AG04450 (cell line): ENCODE measurements at regions of chr2 and their contacts with region 1.

Region 1: DNA sequence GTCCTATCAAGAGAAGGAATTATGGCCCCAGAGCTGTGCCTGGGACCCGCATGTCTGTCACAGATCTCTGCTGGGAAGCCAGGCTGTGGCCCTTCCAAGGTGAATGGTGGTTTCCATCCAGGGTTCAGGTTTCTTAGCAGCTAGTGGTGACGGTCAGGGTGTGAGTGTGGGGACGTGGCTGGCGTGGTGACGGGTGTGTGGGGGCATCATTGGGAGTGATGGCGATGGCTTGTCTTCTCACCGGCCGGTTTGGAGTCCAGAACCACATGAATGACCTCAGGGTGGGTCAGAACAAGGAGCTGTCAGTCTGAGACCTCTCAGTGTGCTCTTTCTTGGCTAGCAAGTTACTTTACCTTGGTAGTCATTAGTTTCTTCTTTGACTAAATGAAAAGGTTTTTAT is 52.6 kb downstream of the AGAP1 start:
- DNase-seq: no peak
- H3K4me3 ChIP-seq: no peak overlapping the region
- H3K27ac ChIP-seq: no peak overlapping the region
- H3K27me3 ChIP-seq: no peaks in the 10 kb centered on the region
- CTCF ChIP-seq: no peak

Region 2: DNA sequence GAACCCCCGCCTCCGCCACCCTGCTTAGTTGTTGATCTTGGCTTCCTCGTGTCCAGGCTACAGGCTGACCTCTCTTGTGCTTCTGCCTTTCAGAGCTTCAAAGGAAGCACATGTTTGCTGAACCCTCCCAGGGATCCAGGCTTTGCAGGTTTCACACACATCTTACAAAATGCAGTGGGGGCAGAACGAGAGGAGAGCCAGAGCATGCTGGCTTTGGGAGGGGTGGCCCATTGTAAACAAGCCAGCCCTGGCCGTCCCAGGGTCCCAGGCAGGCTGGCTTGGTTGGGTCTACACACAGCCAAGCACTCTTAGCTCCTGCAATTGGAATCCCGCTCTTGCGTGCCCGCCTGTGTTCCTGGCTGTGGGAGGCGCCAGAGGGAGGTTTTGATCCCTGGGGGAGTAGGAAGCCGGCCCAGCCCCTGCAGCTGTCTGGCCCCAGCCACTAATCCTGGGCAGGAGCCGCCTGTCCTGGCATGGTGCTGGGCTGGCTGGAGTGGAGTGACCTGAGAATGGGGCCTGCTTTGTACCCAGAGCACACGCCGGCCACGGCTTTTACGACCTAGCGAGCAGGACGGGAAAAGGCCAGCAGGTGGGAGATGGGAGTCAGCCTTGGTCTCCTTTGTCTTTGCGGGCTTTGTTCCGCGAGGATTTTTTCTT is 540.7 kb before region 1 on chr2:
- CTCF ChIA-PET with region 1: no interaction called
- POLR2A ChIA-PET with region 1: no interaction called
- DNase-seq: no peak
- H3K4me3 ChIP-seq: no peak overlapping the region
- H3K27ac ChIP-seq: peak overlapping the region; percentile 31
- H3K27me3 ChIP-seq: no peaks in the 10 kb centered on the region
- CTCF ChIP-seq: peak; percentile 4; the same call in 1 of the 2 replicates

Region 3: DNA sequence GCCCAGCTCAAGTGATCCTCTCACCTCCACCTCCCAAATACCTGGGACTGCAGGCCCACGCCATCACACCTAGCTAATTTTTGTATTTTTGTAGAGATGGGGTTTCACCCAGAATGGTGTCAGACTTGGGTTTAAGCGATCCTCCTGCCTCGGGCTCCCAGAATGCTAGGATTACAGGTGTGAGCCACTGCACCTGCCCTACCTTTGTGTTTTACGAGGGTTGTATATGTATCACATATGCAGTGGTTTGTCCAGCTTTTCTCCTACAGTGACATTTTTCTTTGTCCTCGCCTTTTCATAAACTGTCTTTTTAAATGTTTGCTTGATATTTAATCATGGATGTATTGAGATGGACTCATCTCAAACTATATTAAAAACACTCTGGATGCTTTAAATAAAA is 14.1 kb before region 1 on chr2:
- CTCF ChIA-PET with region 1: no interaction called
- POLR2A ChIA-PET with region 1: no interaction called
- DNase-seq: no peak
- H3K4me3 ChIP-seq: no peak overlapping the region
- H3K27ac ChIP-seq: no peak overlapping the region
- H3K27me3 ChIP-seq: no peaks in the 10 kb centered on the region
- CTCF ChIP-seq: no peak

Region 4: DNA sequence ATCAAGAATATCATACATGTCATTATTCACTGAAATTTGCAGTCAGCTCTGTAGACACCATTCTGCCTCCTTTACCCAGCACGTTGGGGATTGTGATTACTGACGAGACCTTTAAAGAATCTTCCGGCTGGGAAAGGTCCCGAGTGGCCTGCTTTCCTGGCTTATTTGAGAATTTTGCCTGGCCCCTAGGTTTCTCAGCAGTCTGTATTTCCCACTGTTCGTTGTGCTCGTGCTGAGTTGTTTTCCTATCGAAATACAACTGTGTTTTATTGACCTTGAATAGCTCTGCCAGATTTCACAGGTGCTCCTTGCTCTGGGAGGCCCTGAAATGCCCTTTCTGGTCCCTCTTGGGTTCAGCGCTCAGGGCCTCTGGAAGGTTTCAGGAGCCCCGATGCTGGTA is 42.3 kb after region 1 on chr2:
- CTCF ChIA-PET with region 1: interaction called, 15 read pairs
- POLR2A ChIA-PET with region 1: no interaction called
- DNase-seq: no peak
- H3K4me3 ChIP-seq: no peak overlapping the region
- H3K27ac ChIP-seq: no peak overlapping the region
- H3K27me3 ChIP-seq: no peaks in the 10 kb centered on the region
- CTCF ChIP-seq: no peak